GM12878 (cell line): ENCODE measurements at regions of chr14 and their contacts with region 1.

Region 1: GRCh38 chr14:60288279-60288678 is 39.3 kb downstream of the PPM1A start:
- DNase-seq: no peak
- ATAC-seq: no peak
- H3K4me3 ChIP-seq: no peak overlapping the region
- H3K27ac ChIP-seq: no peak overlapping the region
- H3K4me1 ChIP-seq: no peaks in the 10 kb centered on the region
- H3K27me3 ChIP-seq: no peaks in the 10 kb centered on the region
- CTCF ChIP-seq: no peak
- EP300 ChIP-seq: no peak
- POLR2A ChIP-seq: no peak
- RAD21 ChIP-seq: no peak

Region 2: DNA sequence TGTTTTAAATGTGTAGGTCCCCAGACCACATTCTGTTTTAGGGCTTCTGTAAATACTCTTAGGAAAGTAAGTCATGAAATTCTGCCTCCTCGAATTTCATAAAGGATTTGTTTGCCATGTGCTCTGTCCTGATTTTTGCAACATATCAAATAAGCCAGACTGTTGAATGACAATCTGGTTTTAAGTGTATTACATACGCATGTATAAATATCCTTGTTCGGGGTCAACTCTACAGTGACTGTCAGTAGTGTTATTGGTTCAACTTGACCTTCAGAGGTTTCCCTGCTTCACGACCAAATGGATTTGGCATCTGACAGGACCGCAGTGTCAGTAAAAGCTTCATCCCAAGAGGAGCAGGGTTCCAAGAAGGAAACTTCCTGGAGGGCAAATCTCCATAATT is 13.4 kb after region 1 on chr14:
- CTCF ChIA-PET with region 1: interaction called, 12 read pairs
- POLR2A ChIA-PET with region 1: no interaction called
- RAD21 ChIA-PET with region 1: interaction called, 3 read pairs
- SMC1A ChIA-PET with region 1: interaction called, 15 read pairs
- in situ Hi-C with region 1: no loop called
- intact Hi-C with region 1: no loop called
- DNase-seq: no peak
- ATAC-seq: no peak
- H3K4me3 ChIP-seq: no peak overlapping the region
- H3K27ac ChIP-seq: no peak overlapping the region
- H3K4me1 ChIP-seq: no peaks in the 10 kb centered on the region
- H3K27me3 ChIP-seq: no peaks in the 10 kb centered on the region
- CTCF ChIP-seq: no peak
- EP300 ChIP-seq: no peak
- POLR2A ChIP-seq: no peak
- RAD21 ChIP-seq: no peak